ENCODE measurements at regions of chr19 and their contacts with region 1.

Region 1: GRCh38 chr19:6048808-6049405 is 61.4 kb downstream of the RFX2 start:
- DNase-seq: peak; percentile 86
- ATAC-seq: peak; percentile 98

Region 2: DNA sequence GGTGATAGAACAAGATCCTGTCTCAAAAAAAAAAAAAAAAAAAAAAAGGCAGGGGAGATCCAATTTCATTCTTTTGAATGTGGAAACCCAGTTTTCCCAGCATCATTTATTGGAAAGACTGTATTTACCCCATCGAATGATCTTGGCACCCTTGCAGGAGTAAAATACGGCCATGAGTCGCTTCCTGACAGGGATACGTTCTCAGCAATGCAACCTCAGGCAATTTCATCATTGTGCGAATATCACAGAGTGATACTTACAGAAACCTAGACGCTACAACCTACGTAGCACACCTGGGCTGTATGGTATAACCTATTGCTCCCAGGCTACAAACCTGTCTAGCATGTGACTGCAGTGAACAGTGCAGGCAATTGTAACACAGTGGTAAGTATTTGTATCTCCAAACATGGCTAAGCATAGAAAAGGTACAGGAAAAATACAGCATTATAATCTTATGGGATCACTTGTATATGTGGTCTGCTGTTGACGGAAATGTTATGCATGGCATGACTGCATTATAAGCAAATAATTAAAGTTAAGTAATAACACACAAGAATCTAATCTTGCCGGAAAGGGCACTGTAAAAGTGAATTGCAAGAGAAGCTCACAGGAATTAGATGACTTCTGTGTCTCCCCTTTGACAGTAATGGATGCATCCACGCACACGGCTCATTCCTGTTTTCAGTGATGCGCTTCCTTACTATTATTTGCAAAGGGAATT is 37.3 kb after region 1 on chr19:
- intact Hi-C with region 1: no loop called
- DNase-seq: no peak
- ATAC-seq: no peak

Region 3: GRCh38 chr19:6125571-6125989 is 76.7 kb after region 1 on chr19:
- intact Hi-C with region 1: loop called (anchors 2 kb)
- DNase-seq: peak; percentile 49
- ATAC-seq: peak; percentile 93

Region 4: GRCh38 chr19:6279931-6280591 is 231.2 kb after region 1 on chr19 and contains the start of gene MLLT1:
- intact Hi-C with region 1: loop called (anchors 10 kb)
- DNase-seq: peak; percentile 98
- ATAC-seq: peak; percentile 99
- total RNA-seq, gene MLLT1: 37.2 TPM

Measured in Right ventricle myocardium superior (tissue), 1 donor.